OCI-LY7 (cell line): ENCODE measurements at regions of chr15 and their contacts with region 1.

Region 1: DNA sequence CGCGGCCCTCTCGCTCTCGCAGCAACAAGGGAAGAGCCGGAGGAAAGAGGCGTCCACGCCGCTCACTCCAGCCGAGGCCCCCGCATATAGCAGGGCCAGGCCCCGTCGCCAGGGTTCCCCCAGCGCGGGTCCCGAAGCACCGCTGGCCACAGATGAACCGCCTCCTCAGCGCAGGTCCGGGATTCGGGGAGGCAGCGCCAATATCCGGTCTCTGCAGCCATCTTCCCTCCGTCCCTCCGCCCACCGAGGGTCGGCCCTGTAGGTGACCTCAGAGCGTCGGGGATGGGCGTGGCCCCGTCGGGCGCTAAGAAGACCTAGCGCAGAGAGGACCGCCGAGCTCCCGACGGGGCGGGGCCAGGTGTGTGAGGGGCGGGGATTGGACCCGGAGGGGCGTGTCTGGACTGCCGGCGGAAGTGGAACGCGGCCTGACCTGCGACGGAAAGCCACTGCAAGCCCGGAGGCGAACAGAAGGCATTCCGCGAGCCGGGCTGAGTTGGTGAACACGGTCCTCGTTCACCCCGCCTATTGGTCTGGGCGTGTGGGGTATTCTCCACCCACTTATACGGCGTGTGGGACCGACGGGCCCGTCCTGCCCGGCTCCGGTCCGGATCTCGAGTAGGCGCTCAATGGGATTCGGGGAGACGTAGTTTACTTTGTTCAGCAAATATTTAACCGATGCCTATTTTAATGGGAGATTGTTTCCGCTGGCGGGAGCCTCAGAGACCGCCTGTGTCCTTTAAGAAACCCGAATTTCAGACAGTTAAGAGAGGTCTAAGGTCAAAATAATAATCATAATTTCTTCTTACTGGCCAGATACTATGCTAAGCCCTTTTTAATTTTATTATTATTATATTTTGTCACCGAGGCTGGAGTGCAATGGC is 26.9 kb upstream of the MTHFS start:
- DNase-seq: peak; percentile 98
- H3K4me3 ChIP-seq: peak overlapping the region; percentile 84
- H3K27ac ChIP-seq: peak overlapping the region; percentile 86
- H3K4me1 ChIP-seq: peaks cover 17% of the 10 kb centered on the region
- CTCF ChIP-seq: no peak

Region 2: DNA sequence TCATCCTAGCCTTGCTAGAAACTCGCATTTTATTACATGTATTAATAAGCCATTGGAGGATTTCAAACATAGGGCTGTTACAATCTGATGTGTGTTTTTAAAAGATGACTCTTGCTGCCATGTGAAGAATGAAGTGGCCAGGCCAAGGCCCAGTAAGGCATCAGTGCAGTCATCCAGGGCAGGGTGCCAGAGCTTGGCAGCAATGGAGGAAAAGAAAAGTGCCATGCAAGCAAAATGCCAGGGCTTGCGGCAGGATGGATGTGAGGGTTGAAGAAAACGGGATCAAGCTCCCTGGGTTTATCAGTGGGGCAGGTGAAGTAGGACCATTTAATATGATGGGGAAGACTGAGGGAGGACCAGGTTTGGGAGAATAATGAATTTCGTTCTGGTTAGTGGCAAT is 308.0 kb before region 1 on chr15:
- CTCF ChIA-PET with region 1: no interaction called
- POLR2A ChIA-PET with region 1: no interaction called
- intact Hi-C with region 1: no loop called
- DNase-seq: no peak
- H3K4me3 ChIP-seq: no peak overlapping the region
- H3K27ac ChIP-seq: no peak overlapping the region
- H3K4me1 ChIP-seq: no peaks in the 10 kb centered on the region
- CTCF ChIP-seq: no peak

Region 3: DNA sequence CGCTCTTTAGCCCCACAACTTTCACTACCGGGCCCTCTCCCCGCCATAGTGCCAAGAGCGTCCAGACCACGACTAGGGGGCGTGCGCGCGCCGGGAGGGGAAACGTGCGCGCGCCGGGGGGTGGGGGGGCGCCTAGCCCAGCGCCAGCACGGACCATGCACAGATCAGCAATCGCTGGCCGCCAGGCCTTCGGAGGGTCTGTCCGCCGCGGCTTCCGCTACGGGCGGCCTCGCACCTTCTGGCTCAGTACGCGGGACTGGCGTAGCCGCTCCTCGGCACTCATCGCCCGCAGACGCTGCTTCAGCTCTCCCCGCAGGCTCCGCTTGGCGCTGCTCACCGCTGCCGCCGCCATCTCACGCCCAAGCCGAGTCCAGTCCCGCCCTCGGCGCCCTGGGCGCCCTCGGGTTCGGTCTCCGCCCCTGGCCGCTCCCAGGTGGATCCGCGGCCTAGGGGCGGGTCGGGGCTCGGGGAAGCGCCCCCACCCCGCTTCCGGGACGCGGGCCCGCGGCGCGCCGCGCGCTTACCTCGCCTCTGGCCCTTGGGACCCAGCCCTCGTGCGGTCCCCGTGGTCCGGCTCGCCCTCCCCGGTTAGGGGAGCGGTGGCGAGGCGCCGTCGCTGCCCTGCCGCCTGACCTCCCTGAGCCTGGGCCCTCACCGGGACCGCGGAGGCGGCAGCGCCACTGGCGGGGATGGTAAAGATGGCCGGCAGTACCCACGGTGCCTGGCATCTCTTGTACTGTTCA is 26.9 kb before region 1 on chr15 and contains the start of gene MTHFS:
- CTCF ChIA-PET with region 1: no interaction called
- POLR2A ChIA-PET with region 1: interaction called, 22 read pairs
- intact Hi-C with region 1: loop called (anchors 2 kb)
- DNase-seq: peak; percentile 85
- H3K4me3 ChIP-seq: peak within 1 kb of the TSS; percentile 80
- H3K27ac ChIP-seq: peak within 1 kb of the TSS; percentile 62
- H3K4me1 ChIP-seq: peaks cover 19% of the 10 kb centered on the region
- CTCF ChIP-seq: peak; percentile 69
- total RNA-seq, gene MTHFS: 12.4 and 16.4 TPM in 2 replicates

Region 4: DNA sequence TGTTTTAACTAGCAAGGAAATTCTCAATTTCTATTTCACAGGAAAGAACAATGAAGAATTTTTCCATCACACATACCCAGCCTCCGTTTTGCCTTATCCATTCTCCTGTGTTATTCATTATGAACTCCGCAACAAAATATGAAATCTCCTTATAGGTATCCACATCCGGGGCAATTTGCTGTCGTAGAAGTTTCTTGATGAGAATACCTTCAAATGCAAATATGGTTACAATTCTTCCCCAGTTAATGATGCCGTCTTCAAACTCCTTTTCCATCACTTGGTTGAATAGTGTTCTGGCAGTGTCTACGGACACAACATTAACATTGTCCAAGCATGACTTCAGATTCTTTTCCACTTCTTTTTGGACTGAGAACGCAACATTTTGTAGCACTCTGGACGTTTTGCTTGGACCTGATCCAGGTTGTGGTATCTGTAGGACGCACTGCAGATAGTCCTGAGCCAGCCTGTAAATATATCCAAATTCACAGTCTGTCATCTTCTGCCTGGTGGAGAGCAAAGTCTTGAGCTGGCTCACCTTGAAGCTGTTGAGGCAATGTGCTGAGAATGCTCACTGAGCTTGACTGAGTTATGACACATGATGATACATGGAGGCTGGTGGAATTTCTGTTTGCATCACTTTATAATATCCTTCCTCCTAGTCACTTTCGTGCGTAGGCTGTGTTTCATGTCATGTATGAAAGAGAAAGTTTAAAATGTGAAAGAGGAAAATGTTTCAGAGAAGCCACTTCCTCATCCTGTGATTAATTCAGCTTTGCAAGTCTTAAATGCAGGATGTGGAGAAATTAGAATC is 47.1 kb after region 1 on chr15 and contains the start of gene BCL2A1:
- CTCF ChIA-PET with region 1: no interaction called
- POLR2A ChIA-PET with region 1: interaction called, 21 read pairs
- intact Hi-C with region 1: loop called (anchors 5 kb)
- DNase-seq: peak; percentile 51
- H3K4me3 ChIP-seq: peak within 1 kb of the TSS; percentile 28
- H3K27ac ChIP-seq: no peak within 1 kb of the TSS
- H3K4me1 ChIP-seq: peaks cover 53% of the 10 kb centered on the region
- CTCF ChIP-seq: no peak
- total RNA-seq, gene BCL2A1: 0.85 and 2.2 TPM in 2 replicates

Region 5: DNA sequence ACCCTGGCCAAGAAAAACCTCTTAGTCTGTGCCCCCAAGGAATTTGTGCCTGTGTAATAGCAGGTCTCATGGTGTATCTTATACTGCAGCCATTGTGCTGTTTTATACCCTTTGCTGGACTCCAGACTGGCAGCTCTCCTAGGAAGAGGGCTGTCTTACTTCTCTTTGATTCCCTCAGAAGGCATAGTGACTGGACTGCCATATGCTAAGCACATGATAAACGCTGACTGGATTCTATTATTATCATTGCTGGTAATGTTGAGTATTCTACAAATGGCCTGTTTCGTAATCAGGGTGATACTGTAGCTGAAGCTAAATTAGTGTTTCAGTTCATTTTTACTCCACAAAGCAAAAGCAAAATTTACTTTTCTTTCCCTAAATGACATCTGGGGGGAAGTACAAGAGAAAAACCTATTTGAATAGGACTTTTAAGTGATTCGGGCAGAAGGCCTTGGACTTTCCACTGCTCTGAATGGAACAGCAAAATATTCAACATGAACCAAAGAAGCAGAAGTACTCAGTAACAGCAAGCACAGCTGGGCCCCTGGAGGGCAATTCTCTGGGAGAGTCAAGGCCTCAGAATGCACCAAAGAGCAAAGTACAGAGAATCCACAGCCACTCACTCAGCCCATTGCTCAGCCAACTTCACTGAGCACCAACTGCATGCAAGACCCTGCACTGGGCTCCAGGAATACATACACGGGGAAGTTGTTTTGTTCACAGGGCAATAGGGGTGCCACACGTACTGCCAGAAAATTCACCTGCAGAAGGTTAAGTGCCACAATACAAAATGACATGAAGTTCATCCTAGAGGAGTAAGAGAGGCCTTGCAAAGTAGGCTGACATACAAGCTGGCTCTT is 55.1 kb after region 1 on chr15:
- CTCF ChIA-PET with region 1: no interaction called
- POLR2A ChIA-PET with region 1: interaction called, 3 read pairs
- intact Hi-C with region 1: loop called (anchors 5 kb)
- DNase-seq: peak; percentile 36
- H3K4me3 ChIP-seq: no peak overlapping the region
- H3K27ac ChIP-seq: peak overlapping the region; percentile 33
- H3K4me1 ChIP-seq: peaks cover 29% of the 10 kb centered on the region
- CTCF ChIP-seq: no peak

Region 6: DNA sequence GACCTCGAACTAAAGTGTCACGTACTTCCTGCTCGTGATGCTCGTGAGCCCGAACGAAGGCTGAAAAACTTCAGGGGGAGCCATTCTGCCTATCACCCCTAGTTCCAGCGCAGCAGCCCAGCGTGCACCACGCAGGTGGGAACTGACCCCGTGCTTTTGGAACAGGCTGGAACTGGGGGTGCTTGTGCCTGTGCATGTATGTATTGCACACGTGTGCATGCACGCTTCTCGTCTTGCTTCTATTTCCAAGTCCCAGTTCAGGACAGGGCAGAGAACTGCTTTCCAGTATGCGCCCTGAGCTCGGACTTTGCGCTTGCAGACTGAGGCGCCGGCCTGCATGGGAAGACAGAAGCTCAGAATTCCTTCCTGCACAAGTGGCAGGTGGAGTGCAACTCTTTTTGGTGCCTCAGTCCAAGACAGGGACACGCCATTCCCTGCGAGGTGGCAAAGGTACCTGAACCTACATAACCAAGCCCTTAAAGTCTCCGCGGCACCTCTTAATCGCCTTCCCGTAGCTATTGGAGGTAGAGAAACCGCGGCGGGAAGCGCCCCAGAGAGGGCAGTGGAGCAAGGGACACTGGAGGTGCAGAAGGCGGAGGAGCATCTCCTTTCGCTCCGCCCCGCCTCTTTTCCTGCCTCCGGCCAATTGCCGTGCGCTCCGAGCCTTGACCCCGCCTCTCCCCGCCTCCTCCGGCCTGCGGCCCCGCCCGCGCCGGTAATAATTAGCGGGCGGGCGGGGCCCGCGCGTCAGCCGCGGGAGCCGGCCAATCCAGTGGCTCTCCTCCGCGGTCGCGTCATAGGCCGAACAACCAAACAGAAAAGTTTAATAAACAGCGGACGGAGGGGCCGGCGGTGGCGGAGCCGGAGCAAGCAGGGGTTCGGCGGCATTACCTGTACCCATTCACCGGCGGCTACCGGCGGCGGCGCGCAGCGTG is 135.4 kb after region 1 on chr15 and contains the start of gene ZFAND6:
- CTCF ChIA-PET with region 1: no interaction called
- POLR2A ChIA-PET with region 1: interaction called, 4 read pairs
- intact Hi-C with region 1: loop called (anchors 2 kb)
- DNase-seq: peak; percentile 96
- H3K4me3 ChIP-seq: peak within 1 kb of the TSS; percentile 94
- H3K27ac ChIP-seq: peak within 1 kb of the TSS; percentile 81
- H3K4me1 ChIP-seq: peaks cover 40% of the 10 kb centered on the region
- CTCF ChIP-seq: 0 out of 2 replicates have a peak, but pooled peaks have one; percentile 29
- total RNA-seq, gene ZFAND6: 111 and 122 TPM in 2 replicates

Region 7: GRCh38 chr15:80072285-80072994 is 148.7 kb after region 1 on chr15:
- CTCF ChIA-PET with region 1: no interaction called
- POLR2A ChIA-PET with region 1: interaction called, 5 read pairs
- intact Hi-C with region 1: loop called (anchors 5 kb)
- DNase-seq: peak; percentile 85
- H3K4me3 ChIP-seq: peak overlapping the region; percentile 71
- H3K27ac ChIP-seq: peak overlapping the region; percentile 60
- H3K4me1 ChIP-seq: peaks cover 54% of the 10 kb centered on the region
- CTCF ChIP-seq: no peak

Region 8: GRCh38 chr15:80152180-80152845 is 228.6 kb after region 1 on chr15:
- CTCF ChIA-PET with region 1: no interaction called
- POLR2A ChIA-PET with region 1: no interaction called
- intact Hi-C with region 1: loop called (anchors 5 kb)
- DNase-seq: peak; percentile 91
- H3K4me3 ChIP-seq: peak overlapping the region; percentile 73
- H3K27ac ChIP-seq: no peak overlapping the region
- H3K4me1 ChIP-seq: peaks cover 14% of the 10 kb centered on the region
- CTCF ChIP-seq: no peak